ENCODE measurements at regions of chr12 and their contacts with region 1.

Region 1: GRCh38 chr12:121005346-121005815 is 10.9 kb downstream of the C12orf43 start:
- DNase-seq: peak; percentile 67
- H3K4me3 ChIP-seq: no peak overlapping the region
- H3K27ac ChIP-seq: no peak overlapping the region
- H3K4me1 ChIP-seq: no peaks in the 10 kb centered on the region
- H3K27me3 ChIP-seq: no peaks in the 10 kb centered on the region
- CTCF ChIP-seq: peak; percentile 76

Region 2: GRCh38 chr12:120640840-120641833 is 364.2 kb before region 1 on chr12:
- intact Hi-C with region 1: loop called (anchors 10 kb)
- DNase-seq: peak; percentile 58
- H3K4me3 ChIP-seq: peak overlapping the region; percentile 47
- H3K27ac ChIP-seq: no peak overlapping the region
- H3K4me1 ChIP-seq: peaks cover 3% of the 10 kb centered on the region
- H3K27me3 ChIP-seq: peaks cover 40% of the 10 kb centered on the region
- CTCF ChIP-seq: no peak

Region 3: DNA sequence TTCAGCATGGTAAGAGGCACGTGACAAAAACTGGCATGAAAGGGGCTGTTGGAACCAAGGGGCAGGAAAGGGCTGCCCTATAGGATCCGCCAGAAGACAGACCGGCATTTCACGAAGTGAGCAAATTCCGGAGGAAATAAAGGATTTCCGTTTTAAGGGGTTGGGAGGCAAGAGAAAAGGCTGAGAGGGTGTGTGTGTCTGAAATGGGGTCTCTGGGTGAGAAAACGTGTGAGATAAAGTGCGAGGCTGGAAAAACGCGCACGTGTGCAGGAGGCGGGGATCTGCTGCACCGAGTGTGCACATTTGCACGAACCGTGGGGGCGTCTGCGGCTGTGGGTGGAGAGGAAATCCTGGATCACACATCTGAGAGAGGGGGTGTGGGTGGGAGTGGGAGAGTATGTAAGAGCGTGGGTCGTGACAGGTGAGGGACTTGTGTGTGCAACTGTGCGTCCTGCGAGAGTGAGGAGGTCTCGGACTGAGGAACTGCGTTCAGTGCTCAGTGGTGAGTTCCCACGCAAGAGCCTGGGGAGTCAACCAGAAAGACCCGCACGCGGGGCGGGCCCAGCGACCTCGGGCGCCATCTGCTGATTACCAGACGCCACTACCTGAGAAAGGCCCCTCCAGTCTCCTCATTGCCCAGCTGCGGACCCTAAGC is 90.3 kb after region 1 on chr12:
- intact Hi-C with region 1: loop called (anchors 5 kb)
- DNase-seq: peak; percentile 68
- H3K4me3 ChIP-seq: peak overlapping the region; percentile 9
- H3K27ac ChIP-seq: no peak overlapping the region
- H3K4me1 ChIP-seq: no peaks in the 10 kb centered on the region
- H3K27me3 ChIP-seq: no peaks in the 10 kb centered on the region
- CTCF ChIP-seq: peak; percentile 87